GM18951 (cell line): ENCODE measurements at regions of chr12 and their contacts with region 1.

Region 1: GRCh38 chr12:92034858-92035401 is 110.7 kb downstream of the BTG1 start:
- POLR2A ChIP-seq: peak; percentile 30

Region 2: DNA sequence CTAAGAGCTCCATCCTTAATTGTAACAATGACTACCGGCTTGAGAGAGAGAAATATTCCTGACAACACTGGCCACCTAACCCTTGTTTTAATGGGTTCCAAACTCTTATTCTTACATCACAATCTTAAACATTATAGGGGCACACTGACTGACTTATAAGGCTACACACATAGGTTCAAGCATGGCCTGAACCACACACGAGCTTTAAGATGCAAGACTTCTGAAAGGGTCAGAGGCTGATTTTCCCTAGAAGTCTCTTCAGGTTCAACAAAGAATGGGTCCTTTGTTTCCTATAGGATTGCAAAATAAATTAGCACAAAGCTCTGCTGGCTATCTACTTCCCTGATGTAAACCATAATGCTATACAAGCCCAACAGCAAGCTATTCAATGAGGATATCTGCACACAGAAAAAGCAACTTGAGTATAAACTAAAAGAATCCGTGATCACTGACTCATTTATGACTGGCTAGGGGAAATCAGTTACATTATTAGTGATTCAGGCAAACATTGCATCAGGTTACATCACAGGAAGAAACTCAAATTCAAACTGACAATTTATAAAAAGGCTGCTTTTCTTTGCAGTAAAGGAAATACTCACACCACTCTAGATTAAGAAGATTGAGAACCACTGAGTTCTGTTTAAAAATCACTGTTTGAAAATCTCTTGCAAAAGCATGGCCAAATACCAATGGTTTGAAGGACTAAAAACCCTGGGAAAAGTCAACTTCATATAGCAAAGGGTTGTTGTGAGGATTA is 102.2 kb after region 1 on chr12:
- in situ Hi-C with region 1: loop called (anchors 10 kb)
- POLR2A ChIP-seq: no peak

Region 3: DNA sequence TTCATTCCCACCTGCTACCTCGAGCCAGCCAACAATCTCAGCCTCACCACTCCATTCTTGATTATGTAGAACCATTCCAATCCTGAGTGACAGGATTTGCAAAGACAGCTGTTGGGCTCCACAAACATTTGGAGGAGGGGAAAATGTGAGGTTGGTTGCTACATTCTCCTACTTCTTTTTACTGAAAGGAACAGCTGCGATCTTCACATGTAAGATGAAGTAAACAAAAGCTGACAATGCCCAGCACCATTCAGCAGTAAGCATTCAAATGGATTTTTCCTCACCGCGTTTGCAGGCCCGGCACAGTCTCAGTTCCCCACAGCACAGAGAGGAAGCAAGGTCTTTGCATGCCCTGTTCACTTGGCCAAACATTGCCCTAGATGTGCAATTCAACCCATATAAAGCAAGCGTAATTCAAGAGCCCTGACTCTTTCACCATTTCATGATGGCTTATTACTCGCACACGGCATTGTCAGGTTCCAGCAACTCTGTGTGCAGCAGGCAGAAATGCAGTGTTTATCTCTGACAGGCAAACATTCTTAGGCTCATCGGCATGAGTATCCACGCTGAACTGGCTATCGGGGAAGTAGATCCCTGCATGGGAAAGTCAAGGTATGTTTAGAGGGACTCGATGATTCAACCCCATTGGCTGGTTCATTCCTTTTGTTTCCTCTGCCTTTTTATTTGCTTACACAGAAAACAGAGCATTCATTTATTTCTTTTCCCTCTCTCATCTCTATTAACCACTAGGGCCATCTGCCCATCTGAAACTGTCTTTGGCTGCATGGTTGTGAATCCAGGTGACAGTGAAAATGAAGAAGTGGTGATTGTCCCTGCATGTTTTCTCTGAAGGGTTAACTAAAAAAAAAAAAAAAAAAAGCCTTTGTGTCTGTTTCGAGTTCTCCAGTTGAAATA is 431.7 kb after region 1 on chr12:
- in situ Hi-C with region 1: no loop called
- POLR2A ChIP-seq: peak; percentile 75